ENCODE measurements at regions of chr6 and their contacts with region 1.

Region 1: DNA sequence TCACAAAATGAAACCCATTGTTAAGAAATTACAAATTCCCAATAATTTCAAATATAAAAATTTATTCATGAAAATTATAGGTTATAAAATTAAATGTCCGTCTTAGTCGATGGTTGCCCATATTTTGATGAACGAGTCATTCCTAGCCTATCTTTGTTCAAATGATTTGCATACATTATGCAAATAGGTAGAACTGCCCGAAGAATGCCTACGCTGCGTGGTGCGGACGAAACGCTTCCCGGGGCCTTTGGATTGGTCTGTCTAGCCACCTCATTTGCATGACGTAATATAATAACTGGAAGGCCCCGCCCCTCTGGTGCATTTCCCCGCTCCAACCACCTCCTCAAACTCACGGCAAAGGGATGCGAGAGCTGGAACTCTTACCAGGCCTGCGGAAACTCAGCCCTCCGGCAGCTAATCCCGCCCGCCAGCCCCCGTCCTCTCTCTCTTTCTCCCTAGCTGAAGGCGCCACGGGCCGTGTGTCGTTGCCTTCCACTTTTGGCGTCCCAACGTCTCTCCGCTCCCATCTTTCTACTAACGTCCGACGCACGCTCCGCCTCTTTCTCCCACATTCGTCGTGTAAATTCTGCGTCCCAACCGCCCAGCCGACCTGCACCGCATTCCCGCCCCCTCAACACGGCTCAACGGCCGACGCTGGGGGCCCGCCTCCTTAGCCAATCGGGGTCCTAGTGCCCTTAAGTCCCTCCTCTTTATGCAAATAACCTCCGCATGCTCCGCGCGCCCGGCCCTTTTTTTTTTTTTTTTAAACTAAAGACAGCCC is 520 bp upstream of the PRRC2A start:
- DNase-seq: peak; percentile 100
- H3K4me3 ChIP-seq: peak overlapping the region; percentile 76
- H3K27ac ChIP-seq: peak overlapping the region; percentile 99
- H3K4me1 ChIP-seq: peaks cover 18% of the 10 kb centered on the region
- H3K27me3 ChIP-seq: no peaks in the 10 kb centered on the region
- CTCF ChIP-seq: no peak

Region 2: GRCh38 chr6:31580807-31581433 is 39.1 kb before region 1 on chr6:
- CTCF ChIA-PET with region 1: no interaction called
- POLR2A ChIA-PET with region 1: no interaction called
- intact Hi-C with region 1: loop called (anchors 1 kb)
- DNase-seq: peak; percentile 86
- H3K4me3 ChIP-seq: peak overlapping the region; percentile 78
- H3K27ac ChIP-seq: peak overlapping the region; percentile 56
- H3K4me1 ChIP-seq: no peaks in the 10 kb centered on the region
- H3K27me3 ChIP-seq: no peaks in the 10 kb centered on the region
- CTCF ChIP-seq: peak; percentile 95

Region 3: DNA sequence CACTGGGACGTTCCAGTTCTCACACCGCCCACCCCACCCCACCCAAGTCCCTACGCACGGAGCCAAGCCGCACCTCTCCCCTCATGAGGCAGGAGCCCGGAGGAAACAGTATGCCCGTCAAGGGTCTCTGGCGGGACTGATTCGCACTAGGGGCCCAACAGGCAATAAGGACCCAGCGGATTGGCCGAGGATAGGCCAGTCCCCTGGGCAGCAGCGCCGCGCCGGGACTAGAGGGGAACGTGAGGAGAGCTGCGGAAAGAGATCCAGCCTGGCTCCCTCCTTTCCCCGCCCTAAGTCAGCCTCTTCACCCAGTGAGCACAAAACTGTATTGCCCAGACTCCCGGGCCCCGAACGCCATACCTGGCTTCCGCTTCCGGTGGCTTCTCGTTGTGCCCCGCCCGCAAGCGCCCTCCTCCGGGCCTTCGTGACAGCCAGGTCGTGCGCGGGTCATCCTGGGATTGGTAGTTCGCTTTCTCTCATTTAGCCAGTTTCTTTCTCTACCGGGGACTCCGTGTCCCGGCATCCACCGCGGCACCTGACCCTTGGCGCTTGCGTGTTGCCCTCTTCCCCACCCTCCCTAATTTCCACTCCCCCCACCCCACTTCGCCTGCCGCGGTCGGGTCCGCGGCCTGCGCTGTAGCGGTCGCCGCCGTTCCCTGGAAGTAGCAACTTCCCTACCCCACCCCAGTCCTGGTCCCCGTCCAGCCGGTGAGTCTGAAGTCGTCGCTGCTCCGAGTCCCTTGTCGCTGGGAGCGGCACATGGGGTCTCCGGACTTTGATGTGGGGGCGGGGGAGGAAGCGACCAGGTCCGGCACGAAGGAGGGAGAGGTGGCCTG is 45.7 kb after region 1 on chr6 and contains the start of gene CSNK2B:
- CTCF ChIA-PET with region 1: interaction called, 7 read pairs
- POLR2A ChIA-PET with region 1: no interaction called
- intact Hi-C with region 1: loop called (anchors 5 kb)
- DNase-seq: peak; percentile 99
- H3K4me3 ChIP-seq: peak within 1 kb of the TSS; percentile 94
- H3K27ac ChIP-seq: peak within 1 kb of the TSS; percentile 97
- H3K4me1 ChIP-seq: peaks cover 20% of the 10 kb centered on the region
- H3K27me3 ChIP-seq: no peaks in the 10 kb centered on the region
- CTCF ChIP-seq: no peak
- total RNA-seq, gene CSNK2B: 252 and 253 TPM in 2 replicates

Measured in A673 (cell line).